HEK293 (cell line): ENCODE measurements at regions of chr12 and their contacts with region 1.

Region 1: DNA sequence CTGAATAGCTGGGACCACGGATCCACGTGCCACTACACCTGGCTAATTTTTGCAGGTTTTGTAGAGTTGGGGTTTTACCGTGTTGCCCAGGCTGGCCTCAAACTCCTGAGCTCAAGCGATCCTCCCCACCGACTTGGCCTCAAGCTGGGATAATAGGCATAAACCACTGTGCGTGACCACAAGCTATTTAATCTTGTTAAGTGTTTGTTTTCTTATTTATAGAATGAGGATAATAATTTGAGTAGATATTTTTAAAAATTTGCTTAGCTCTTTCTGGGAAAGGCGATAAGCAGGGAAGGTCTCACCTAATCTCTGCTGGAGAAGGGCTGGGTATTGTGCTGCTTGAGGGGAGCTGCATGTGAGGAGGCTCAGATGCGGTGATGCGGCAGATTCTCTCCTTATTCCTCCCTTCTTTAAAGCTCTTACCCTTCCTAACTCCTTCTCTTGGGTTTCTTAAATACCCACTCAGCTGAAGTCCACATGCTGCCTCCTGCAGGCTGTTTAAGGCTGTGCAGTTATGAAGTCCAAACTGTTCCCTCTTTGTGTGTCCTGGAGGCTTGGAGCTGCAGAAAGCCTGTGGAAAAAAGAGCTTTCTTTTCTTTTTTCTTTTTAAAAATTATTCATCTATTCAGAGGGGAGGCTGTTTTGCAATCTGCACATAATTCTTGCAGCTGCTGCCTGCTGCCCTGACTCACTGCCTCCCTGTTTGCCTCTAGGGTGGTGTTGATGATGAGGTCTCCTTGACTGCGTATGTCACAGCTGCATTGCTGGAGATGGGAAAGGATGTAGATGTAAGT is 37.9 kb downstream of the A2ML1 start:
- H3K4me3 ChIP-seq: no peak overlapping the region
- H3K27ac ChIP-seq: no peak overlapping the region
- H3K4me1 ChIP-seq: peaks cover 3% of the 10 kb centered on the region; the same call in 1 of the 2 replicates
- CTCF ChIP-seq: peak; percentile 51; the same call in 1 of the 2 replicates

Region 2: GRCh38 chr12:8681041-8681902 is 179.1 kb before region 1 on chr12:
- CTCF ChIA-PET with region 1: interaction called, 26 read pairs
- POLR2A ChIA-PET with region 1: no interaction called
- H3K4me3 ChIP-seq: peak overlapping the region; percentile 20
- H3K27ac ChIP-seq: no peak overlapping the region
- H3K4me1 ChIP-seq: no peaks in the 10 kb centered on the region
- CTCF ChIP-seq: no peak

Region 3: DNA sequence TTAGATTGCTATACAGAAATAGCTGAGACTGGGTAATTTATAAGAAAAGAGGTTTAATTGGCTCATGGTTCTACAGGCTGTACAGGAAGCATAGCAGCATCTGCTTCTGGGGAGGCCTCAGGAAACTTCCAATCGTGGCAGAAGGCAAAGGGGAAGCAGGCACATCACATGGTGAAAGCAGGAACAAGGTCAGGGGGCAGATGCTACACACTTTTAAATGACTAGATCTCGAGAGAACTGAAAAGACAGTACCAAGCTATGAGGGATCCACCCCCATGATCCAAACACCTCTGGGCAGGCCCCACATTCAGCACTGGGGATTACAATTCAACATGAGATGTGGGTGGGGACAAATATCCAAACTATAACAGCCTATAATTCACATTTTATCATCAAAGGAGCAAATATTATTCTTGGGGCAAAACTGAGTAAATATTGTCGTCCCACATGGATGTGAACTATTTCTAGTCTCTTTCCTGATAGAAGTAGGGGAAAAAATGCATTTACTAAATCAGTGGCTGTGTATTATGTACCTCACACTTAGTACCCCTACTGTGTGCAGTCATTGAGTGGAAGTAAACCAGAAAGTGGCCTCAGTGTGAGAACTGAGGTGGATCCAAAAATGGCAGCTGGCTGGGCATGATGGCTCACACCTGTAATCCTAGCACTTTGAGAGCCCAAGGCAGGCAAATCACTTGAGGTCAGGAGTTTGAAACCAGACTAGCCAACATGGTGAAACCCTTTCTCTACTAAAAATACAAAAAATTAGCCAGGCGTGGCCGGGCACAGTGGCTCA is 63.3 kb before region 1 on chr12:
- CTCF ChIA-PET with region 1: no interaction called
- POLR2A ChIA-PET with region 1: no interaction called
- H3K4me3 ChIP-seq: no peak overlapping the region
- H3K27ac ChIP-seq: no peak overlapping the region
- H3K4me1 ChIP-seq: no peaks in the 10 kb centered on the region
- CTCF ChIP-seq: no peak

Region 4: GRCh38 chr12:8844665-8845064 is 15.7 kb before region 1 on chr12:
- CTCF ChIA-PET with region 1: interaction called, 12 read pairs
- POLR2A ChIA-PET with region 1: no interaction called
- H3K4me3 ChIP-seq: no peak overlapping the region
- H3K27ac ChIP-seq: no peak overlapping the region
- H3K4me1 ChIP-seq: no peaks in the 10 kb centered on the region
- CTCF ChIP-seq: no peak

Region 5: GRCh38 chr12:8870586-8870985 is 10.2 kb after region 1 on chr12:
- CTCF ChIA-PET with region 1: interaction called, 17 read pairs
- POLR2A ChIA-PET with region 1: no interaction called
- H3K4me3 ChIP-seq: no peak overlapping the region
- H3K27ac ChIP-seq: no peak overlapping the region
- H3K4me1 ChIP-seq: peaks cover 3% of the 10 kb centered on the region; the same call in 1 of the 2 replicates
- CTCF ChIP-seq: no peak

Region 6: DNA sequence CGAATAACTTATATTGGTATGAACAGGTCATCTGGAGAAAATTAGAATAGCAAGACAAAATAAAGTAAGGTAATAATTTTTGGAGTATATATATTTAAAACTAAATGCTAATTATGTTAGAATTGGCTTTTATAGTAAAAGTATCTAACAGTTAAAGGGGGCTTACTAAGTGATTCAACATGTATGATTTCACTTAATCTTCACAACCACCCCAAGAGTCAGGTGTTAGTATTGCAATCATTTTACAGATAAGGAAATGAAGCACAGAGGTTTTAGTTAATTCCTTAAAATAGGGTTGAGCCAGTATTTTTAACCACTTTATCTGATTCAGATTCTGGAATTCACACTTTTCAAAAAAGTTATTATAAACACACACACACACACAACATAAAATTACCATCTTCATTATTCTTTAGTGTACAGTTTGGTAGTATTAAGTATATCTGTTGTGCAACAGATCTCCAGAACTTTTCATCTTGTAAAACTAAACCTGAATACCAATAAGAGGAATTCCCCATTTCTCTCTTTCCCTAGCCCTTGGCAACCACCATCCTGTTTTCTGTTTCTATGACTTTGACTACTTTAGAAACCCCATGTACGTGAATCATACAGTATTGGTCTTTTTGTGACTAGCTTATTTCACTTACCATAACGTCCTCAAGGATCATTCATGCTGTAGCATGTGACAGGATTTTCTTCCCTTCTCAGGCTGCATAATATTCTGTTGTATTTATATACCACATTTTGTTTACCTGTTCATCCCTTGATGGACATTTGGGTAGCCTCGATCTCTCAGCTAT is 242.9 kb after region 1 on chr12:
- CTCF ChIA-PET with region 1: no interaction called
- POLR2A ChIA-PET with region 1: no interaction called
- H3K4me3 ChIP-seq: no peak overlapping the region
- H3K27ac ChIP-seq: no peak overlapping the region
- H3K4me1 ChIP-seq: no peaks in the 10 kb centered on the region
- CTCF ChIP-seq: no peak

Region 7: DNA sequence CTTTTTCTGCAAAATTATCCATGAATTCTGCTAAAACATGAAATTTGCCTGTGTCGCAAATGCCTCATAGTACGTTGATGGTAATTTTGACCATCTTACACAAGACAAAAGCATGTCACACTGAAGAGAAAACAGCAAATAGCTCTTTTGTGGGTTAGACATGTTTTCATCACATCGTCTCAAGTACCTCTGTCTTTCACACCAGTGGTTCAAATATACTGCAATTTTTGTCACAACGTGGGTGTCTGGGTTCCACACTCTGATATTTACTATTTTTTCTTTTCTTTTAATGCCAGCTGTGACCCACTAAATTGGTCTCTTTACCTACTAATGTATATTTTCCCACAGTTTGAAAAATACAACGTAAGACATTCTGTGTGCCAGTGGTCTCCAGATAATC is 737.0 kb after region 1 on chr12:
- CTCF ChIA-PET with region 1: no interaction called
- POLR2A ChIA-PET with region 1: no interaction called
- H3K4me3 ChIP-seq: no peak overlapping the region
- H3K27ac ChIP-seq: no peak overlapping the region
- H3K4me1 ChIP-seq: no peaks in the 10 kb centered on the region
- CTCF ChIP-seq: no peak